ENCODE measurements at regions of chr2 and their contacts with region 1.

Region 1: DNA sequence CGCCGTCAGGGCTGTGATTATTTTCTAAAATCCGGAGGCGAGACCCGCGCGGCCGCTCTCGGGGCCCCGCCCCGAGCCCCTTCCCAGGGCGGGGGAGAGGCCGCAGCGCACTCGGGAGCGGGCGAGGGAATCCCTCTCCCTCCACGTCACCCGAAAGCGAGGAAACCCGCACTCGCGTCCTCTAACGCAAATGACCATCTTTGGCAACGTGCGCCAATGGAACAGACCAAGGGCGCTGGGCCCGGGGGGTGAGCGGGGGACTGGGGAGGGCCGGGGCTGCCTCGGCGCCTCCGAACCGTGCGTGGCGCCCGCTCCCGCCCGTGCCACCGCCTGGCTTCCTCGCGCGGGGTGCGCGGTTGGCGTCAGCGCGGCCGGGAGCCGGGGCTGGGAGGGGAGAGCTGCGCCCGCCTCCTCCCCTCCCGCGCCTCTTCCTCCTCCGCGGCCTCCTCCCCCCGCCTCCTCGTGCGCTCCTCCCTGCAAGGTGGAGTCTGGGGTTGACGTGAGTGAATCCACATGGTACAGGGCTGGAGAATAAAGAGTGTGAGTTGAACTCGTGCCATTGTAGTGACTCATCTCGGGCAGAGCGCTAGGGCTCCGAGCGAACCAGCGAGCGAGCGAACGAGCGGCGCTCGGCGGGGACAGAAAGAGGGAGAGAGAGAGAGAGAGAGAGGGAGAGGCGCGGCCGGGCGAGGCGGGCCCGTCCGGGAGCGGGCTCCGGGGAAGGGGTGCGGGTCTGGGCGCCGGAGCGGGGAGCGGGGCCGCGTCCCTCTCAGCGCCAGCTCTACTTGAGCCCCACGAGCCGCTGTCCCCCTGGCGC is at the start of gene FOSL2:
- DNase-seq: peak; percentile 98
- H3K4me3 Mint-ChIP-seq: no peak within 1 kb of the TSS
- H3K27ac Mint-ChIP-seq: peak within 1 kb of the TSS; percentile 99
- H3K4me1 Mint-ChIP-seq: peaks cover 38% of the 10 kb centered on the region
- H3K27me3 Mint-ChIP-seq: peaks cover 2% of the 10 kb centered on the region
- total RNA-seq, gene FOSL2: 73.2 and 80.6 TPM in 2 replicates

Region 2: GRCh38 chr2:27211829-27212627 is 1180.5 kb before region 1 on chr2 and contains the starts of genes ATRAID and SLC5A6:
- intact Hi-C with region 1: loop called (anchors 5 kb)
- DNase-seq: peak; percentile 97
- H3K4me3 Mint-ChIP-seq: peak within 1 kb of the TSS; percentile 91
- H3K27ac Mint-ChIP-seq: peak within 1 kb of the TSS; percentile 99
- H3K4me1 Mint-ChIP-seq: peaks cover 40% of the 10 kb centered on the region
- H3K27me3 Mint-ChIP-seq: no peaks in the 10 kb centered on the region
- total RNA-seq, gene ATRAID: 109 and 120 TPM in 2 replicates
- total RNA-seq, gene SLC5A6: 87.1 and 97.9 TPM in 2 replicates

Region 3: DNA sequence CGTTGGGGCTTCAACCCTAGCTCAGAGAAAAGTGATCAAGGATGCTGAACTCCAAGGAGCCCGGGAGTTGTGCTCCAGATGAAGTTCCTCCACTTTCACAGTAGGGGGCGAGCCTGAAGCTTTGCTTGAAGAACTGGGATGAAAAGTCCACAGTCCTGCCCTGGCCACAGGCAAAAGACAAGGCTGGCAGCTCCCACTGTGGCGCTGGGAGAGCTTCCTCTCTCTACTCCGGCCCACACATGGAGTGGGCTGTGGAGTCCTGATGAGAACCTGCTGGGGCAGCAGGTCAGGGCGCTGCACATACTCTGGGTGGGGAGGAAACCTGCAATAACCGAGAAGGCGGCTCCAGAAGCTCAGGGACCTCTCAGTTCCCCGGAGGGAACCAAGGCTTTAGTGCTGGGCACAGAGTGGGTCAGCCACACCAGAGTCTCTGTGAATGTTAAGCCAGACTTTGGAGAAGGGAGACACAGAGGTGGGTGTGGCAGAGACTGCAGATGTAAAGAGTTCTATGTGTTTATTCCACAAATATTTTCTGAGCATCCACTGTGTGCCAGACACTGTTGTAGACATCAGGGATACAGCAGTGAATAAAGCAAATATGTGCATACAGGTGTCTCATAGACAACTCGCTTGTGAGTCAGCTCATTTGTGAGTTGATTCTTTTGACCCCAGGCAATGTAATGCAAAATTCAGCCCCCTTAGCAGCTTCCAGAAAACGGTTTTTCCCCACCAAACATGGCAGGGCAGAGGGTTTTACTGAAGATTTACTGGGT is 668.9 kb before region 1 on chr2:
- intact Hi-C with region 1: loop called (anchors 5 kb)
- DNase-seq: peak; percentile 75
- H3K4me3 Mint-ChIP-seq: no peak overlapping the region
- H3K27ac Mint-ChIP-seq: no peak overlapping the region
- H3K4me1 Mint-ChIP-seq: peaks cover 34% of the 10 kb centered on the region
- H3K27me3 Mint-ChIP-seq: no peaks in the 10 kb centered on the region

Region 4: DNA sequence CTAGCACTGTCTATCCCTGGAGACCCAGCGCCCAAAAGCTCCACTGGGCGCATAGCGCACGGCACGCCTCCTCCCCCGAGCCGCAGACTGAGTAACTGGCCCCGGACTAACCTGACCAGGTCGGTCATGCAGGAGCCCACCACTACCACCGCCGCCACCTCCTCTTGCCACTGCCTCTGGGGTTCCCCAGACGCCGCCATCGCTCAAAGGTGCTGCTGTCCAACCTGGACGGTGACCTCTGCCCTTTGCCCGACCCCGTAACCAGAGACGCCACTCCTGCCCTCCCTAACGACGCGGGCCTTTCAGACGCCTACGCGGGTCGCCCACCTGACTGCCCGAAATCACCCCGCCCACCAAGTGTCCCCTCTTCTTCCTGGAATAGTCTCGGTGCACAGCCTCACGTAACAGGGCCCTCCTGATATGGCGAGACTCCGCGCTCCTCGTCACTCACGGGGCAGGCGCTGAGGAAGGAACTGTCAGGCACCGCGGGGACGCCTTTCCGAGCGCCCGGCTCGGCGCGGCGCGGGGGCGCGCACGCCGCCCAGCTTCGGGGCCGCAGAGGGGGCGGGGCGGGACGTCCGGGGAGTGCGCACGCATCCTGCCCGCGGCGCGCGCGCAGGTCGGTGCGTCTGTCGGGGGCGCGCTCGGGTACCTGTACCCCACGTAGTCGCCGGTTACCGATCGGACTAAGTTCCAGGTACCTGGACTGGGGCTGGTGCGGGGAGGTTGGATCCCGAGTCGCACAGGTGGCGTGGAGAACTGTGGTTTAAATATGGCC is 502.2 kb before region 1 on chr2 and contains the starts of genes BABAM2 and RBKS:
- intact Hi-C with region 1: loop called (anchors 1 kb)
- DNase-seq: peak; percentile 97
- H3K4me3 Mint-ChIP-seq: peak within 1 kb of the TSS; percentile 100
- H3K27ac Mint-ChIP-seq: peak within 1 kb of the TSS; percentile 100
- H3K4me1 Mint-ChIP-seq: peaks cover 57% of the 10 kb centered on the region
- H3K27me3 Mint-ChIP-seq: peaks cover 2% of the 10 kb centered on the region
- total RNA-seq, gene BABAM2: 45.9 and 46.7 TPM in 2 replicates
- total RNA-seq, gene RBKS: 1.3 and 1.4 TPM in 2 replicates

Region 5: GRCh38 chr2:28276076-28276618 is 116.4 kb before region 1 on chr2:
- intact Hi-C with region 1: loop called (anchors 5 kb)
- DNase-seq: peak; percentile 66
- H3K4me3 Mint-ChIP-seq: no peak overlapping the region
- H3K27ac Mint-ChIP-seq: no peak overlapping the region
- H3K4me1 Mint-ChIP-seq: peaks cover 37% of the 10 kb centered on the region
- H3K27me3 Mint-ChIP-seq: no peaks in the 10 kb centered on the region

Region 6: GRCh38 chr2:28413142-28413898 is 20.8 kb after region 1 on chr2:
- intact Hi-C with region 1: loop called (anchors 1 kb)
- DNase-seq: no peak
- H3K4me3 Mint-ChIP-seq: no peak overlapping the region
- H3K27ac Mint-ChIP-seq: peak overlapping the region; percentile 25
- H3K4me1 Mint-ChIP-seq: peaks cover 50% of the 10 kb centered on the region
- H3K27me3 Mint-ChIP-seq: no peaks in the 10 kb centered on the region

Region 7: DNA sequence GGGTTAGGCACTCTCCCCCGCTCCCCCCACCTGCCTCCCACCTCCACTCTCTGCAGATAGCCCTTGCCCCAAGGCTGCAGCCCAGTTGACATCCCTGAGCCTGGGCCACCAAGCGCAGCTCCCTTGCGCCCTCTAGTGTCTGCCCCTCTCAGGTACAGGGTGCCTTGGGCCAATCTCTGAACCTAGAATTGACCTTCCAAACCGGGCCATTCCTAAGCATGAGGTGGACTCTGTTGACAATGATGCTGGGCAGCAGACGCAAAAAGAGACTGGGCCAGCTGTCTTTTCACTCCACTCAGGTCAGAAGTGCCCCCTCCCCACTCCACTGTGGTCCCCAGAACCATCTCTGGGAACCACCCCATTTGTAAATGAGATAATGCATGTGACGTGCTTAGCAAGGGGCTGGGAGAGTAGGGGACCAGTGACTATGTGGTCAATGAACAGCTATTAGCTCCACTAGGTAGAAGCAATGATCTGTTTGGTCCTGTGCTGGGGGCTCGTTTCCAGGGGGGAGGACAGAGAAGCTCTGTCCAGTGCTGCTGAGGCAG is 60.1 kb after region 1 on chr2:
- intact Hi-C with region 1: loop called (anchors 1 kb)
- DNase-seq: peak; percentile 94
- H3K4me3 Mint-ChIP-seq: no peak overlapping the region
- H3K27ac Mint-ChIP-seq: peak overlapping the region; percentile 40
- H3K4me1 Mint-ChIP-seq: peaks cover 42% of the 10 kb centered on the region
- H3K27me3 Mint-ChIP-seq: no peaks in the 10 kb centered on the region

Measured in activated CD4-positive, alpha-beta T cell treated with anti-CD3 and anti-CD28 coated beads, Interleukin-2, amount 10 ng/mL, durations not matched to agents 24 days and 14 days (primary cell).